Activated naive CD4-positive, alpha-beta T cell treated with anti-CD3 and anti-CD28 coated beads for 36 hours (primary cell): ENCODE measurements at regions of chr13 and their contacts with region 1.

Region 1: GRCh38 chr13:101144808-101145419 is 271.4 kb downstream of the NALCN start:
- DNase-seq: peak; percentile 28
- H3K4me3 Mint-ChIP-seq: no peak overlapping the region
- H3K27ac Mint-ChIP-seq: no peak overlapping the region
- H3K4me1 Mint-ChIP-seq: no peaks in the 10 kb centered on the region
- H3K27me3 Mint-ChIP-seq: peaks cover 35% of the 10 kb centered on the region

Region 2: DNA sequence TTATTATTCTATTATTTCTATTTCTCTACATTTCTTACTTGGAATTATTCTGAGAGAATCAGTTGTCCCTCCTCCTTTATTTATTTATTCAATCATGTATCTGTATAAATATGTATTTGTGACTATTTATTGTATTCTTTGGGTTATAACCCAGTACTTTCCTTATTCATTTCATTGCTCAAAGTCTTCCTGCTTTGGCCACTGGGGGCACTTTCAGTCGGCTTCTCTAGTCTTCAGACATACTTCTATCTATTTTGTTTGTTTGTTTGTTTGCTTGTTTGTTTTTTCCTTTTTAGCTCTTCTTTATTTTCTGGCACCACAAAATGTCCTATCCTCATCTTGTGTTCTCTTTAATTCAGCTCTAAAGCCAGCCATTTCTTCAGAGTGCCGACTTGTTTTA is 11.0 kb after region 1 on chr13:
- CTCF ChIA-PET with region 1: interaction called, 16 read pairs
- intact Hi-C with region 1: no loop called
- DNase-seq: no peak
- H3K4me3 Mint-ChIP-seq: no peak overlapping the region
- H3K27ac Mint-ChIP-seq: no peak overlapping the region
- H3K4me1 Mint-ChIP-seq: no peaks in the 10 kb centered on the region
- H3K27me3 Mint-ChIP-seq: peaks cover 34% of the 10 kb centered on the region

Region 3: GRCh38 chr13:101474419-101474957 is 329.6 kb after region 1 on chr13:
- CTCF ChIA-PET with region 1: no interaction called
- intact Hi-C with region 1: loop called (anchors 10 kb)
- DNase-seq: no peak
- H3K4me3 Mint-ChIP-seq: no peak overlapping the region
- H3K27ac Mint-ChIP-seq: no peak overlapping the region
- H3K4me1 Mint-ChIP-seq: no peaks in the 10 kb centered on the region
- H3K27me3 Mint-ChIP-seq: peaks cover 15% of the 10 kb centered on the region

Region 4: GRCh38 chr13:101757446-101758039 is 612.6 kb after region 1 on chr13:
- CTCF ChIA-PET with region 1: interaction called, 9 read pairs
- intact Hi-C with region 1: loop called (anchors 1 kb)
- DNase-seq: no peak
- H3K4me3 Mint-ChIP-seq: no peak overlapping the region
- H3K27ac Mint-ChIP-seq: no peak overlapping the region
- H3K4me1 Mint-ChIP-seq: no peaks in the 10 kb centered on the region
- H3K27me3 Mint-ChIP-seq: peaks cover 12% of the 10 kb centered on the region

Region 5: DNA sequence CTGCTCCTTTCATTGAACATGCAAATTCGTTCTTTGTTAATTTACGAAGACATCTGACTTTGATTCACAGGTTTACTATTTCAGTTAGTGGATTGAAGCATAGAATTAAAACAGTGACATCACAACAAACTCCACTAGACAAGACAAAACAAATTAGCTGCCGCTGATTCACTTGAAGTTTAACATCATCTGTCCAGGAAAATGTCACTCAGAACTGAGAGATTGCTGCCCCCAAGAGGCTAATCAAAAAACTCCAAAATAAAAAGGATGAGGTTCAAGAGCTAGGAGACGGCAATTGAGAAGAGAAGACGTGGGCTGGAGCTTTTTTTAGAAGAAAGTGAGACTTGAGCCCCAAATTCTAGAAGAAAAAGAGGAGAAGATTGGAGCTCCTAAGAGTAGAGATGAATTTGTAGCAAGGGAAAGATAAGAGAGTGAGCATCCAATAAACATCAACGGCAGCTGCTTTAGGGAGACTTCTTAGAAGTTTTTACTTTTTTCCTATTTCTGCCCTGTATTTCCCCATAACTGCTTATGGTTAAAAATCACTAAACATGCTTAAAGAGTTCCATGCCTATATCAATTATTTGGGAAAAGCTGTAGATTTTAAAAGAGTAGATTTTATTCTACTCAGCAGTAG is 1411.1 kb after region 1 on chr13:
- CTCF ChIA-PET with region 1: interaction called, 7 read pairs
- intact Hi-C with region 1: loop called (anchors 1 kb)
- DNase-seq: peak; percentile 27
- H3K4me3 Mint-ChIP-seq: no peak overlapping the region
- H3K27ac Mint-ChIP-seq: no peak overlapping the region
- H3K4me1 Mint-ChIP-seq: peaks cover 3% of the 10 kb centered on the region
- H3K27me3 Mint-ChIP-seq: peaks cover 4% of the 10 kb centered on the region